SK-N-SH (cell line): ENCODE measurements at regions of chr10 and their contacts with region 1.

Region 1: GRCh38 chr10:79422178-79422892 is 23.1 kb downstream of the ZCCHC24 start:
- DNase-seq: peak; percentile 86
- H3K4me3 ChIP-seq: no peak overlapping the region
- H3K27ac ChIP-seq: peak overlapping the region; percentile 71 to 88
- H3K4me1 ChIP-seq: peaks cover 29 to 37% of the 10 kb centered on the region in 2 experiments; a peak in 3 of 4 replicates
- H3K27me3 ChIP-seq: no peaks in the 10 kb centered on the region
- CTCF ChIP-seq: no peak
- EP300 ChIP-seq: peak in 1 of 2 experiments; percentile 64; a peak in 1 of 4 replicates
- RAD21 ChIP-seq: no peak

Region 2: DNA sequence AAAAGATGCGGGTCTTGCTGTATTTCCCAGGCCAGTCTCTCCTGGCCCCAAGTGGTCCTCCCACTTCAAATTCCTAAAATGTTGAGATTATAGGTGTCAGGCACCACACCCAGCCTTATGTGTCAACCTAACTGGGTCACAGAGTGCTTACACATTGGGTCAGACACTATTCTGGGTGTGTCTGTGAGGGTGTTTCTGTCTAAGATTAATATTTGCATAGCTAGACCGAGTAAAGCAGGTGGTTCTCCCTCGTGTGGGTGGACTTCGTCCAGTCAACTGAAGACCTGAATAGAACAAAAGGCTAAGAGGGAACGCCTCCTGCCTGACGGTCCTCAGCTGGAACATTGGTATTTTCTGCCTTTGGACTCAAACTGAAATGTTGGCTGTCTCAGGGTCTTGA is 63.6 kb before region 1 on chr10:
- CTCF ChIA-PET with region 1: no interaction called
- POLR2A ChIA-PET with region 1: no interaction called
- DNase-seq: no peak
- H3K4me3 ChIP-seq: no peak overlapping the region
- H3K27ac ChIP-seq: no peak overlapping the region
- H3K4me1 ChIP-seq: no peaks in the 10 kb centered on the region
- H3K27me3 ChIP-seq: no peaks in the 10 kb centered on the region
- CTCF ChIP-seq: no peak
- EP300 ChIP-seq: no peak
- RAD21 ChIP-seq: no peak

Region 3: DNA sequence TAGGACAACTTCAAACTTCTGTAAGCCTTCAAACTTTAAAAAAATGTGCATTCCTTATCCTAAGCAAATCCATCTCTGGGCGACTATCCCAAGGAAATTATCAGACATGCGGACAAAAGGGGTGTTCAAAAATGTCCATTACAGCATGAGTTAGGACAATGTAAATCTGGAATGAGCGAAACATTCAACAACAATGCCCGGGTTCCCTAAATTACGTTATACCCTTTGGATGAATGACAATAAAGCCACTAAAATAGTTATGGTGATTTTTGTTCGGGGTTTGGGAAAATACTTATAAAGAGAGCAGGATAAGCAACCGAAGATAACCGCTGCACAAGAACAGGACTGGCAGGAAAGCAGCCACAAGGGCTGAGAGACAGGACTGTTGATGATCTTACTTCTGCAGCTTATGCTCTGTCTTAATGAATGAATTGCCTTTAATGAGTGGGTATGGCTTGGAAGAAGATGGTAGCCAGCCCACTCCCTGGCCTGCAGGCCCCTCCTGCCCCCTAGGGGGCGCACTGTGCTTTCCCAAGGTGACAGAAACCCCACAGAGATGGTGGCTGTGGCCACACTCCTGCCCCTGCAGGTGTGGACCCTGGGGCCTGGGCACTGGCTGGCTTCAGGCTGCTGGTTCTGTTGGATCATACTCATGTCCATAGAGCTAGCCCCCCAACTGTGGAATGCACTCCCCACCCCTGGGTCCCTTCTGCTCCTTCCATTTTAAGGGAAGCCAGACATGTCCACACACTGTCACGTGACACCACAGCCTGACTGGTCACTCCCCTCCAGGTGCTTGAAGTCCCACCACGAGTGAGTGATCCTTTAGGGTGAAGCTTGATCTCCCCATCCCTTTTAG is 22.0 kb before region 1 on chr10:
- CTCF ChIA-PET with region 1: interaction called, 29 read pairs
- POLR2A ChIA-PET with region 1: no interaction called
- DNase-seq: peak; percentile 78
- H3K4me3 ChIP-seq: peak overlapping the region in 1 of 2 experiments; percentile 26; a peak in 2 of 4 replicates
- H3K27ac ChIP-seq: peak overlapping the region; percentile 96
- H3K4me1 ChIP-seq: peaks cover 25 to 84% of the 10 kb centered on the region in 2 experiments
- H3K27me3 ChIP-seq: no peaks in the 10 kb centered on the region
- CTCF ChIP-seq: peak; percentile 80
- EP300 ChIP-seq: no peak
- RAD21 ChIP-seq: peak; percentile 71